Posterior vena cava (tissue), 2 donors: ENCODE measurements at regions of chr2 and their contacts with region 1.

Region 1: GRCh38 chr2:202161151-202161835 is 77.1 kb downstream of the SUMO1 start:
- DNase-seq: no peak

Region 2: DNA sequence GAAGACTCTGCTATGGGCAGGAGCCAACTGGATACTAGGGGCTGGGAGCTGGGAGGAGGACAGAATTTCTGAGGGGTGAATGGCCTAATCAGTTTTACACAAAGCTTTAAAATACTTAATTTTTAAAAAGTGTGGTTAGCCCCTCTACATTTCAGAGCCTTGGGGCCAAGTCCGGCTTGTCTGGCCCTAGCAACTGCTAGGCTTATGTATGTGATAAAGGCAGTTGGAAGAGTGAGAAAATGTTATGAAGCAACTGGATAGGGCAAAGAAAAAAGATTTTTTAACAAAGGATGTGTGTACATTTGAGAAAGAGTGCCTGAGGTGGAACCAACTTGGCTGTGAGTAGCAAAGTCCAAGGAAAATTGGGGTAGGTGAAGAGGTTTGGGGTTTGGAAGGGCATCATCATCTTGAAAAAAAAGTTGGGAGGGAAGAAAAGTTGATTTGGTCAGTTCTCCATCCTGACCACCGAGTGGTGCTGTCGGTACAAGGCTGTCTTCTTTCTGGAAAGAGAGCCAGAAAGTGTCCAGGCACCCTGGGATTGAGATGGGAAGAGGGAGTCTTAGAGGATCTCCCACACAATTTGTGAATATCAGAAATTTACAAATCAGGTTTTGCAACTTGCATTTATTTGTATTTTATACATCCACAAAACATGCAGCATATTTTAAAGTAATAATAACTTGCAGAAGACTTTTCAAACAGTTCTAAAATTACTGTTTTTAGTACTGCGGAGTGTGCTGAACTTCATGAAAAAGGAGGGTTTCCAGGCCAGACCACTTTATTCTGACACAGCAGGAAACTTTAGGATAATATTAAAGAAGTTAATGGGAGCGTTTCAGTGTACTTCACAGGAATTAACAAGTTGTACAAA is 365.5 kb before region 1 on chr2:
- intact Hi-C with region 1: loop called in 1 of 2 experiments (anchors 10 kb)
- DNase-seq: no peak

Region 3: GRCh38 chr2:202335791-202336467 is 174.6 kb after region 1 on chr2:
- intact Hi-C with region 1: no loop called
- DNase-seq: peak; percentile 44